ENCODE measurements at regions of chr19 and their contacts with region 1.

Region 1: DNA sequence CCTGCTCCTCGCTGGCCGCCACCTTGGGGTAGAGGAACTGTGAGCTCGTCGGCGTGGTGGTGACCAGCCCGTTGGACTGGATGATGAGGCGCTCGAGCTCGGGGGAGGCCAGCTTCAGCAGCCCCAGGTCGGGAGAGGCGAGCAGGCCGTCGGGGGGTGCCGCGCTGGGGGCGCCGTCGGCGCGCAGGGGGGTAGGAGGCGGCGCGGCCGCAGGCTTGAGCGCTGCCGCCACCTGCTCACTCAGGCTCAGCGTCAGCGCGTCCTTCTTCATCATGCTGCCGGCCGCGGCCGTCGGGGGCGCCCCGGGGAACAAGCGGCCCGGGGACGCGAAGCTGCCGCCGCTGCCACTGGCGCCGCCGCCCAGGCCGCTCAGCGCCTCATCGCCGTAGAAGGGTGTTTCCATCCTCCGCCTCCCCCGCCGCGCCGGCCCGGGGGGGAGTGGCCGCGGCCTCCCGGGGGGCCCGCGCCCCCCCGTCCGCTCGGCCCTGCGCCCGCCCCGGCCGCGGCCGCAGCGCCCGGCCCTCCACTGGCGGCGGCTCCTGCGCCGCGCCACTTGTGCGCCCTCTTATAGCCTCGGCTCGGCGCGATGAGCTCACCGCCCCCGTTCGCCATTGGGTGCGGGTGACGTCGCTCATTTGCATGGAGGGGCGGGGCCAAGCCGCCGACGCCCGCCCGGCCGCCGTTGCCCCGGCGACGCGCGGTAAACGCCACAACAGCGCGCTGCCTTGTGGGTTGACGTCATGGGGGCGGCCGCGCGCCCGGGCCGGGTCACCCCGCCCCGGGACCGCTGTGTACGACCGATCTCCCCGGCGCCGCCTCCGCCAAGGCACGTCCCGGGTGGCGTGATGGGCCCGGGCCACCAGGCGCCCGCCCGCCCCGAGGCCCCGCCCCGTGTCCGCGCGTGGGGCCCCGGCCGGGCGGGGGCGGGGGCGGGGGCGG is at the start of gene JUND:
- DNase-seq: peak; percentile 62 to 98
- ATAC-seq: peak; percentile 64 to 72
- H3K4me3 ChIP-seq: peak within 1 kb of the TSS; percentile 97
- H3K27ac ChIP-seq: peak within 1 kb of the TSS; percentile 96 to 99
- H3K4me1 ChIP-seq: peaks cover 26% of the 10 kb centered on the region
- CTCF ChIP-seq: no peak
- EP300 ChIP-seq: no peak
- POLR2A ChIP-seq: peak; percentile 92
- RAD21 ChIP-seq: no peak
- polyA plus RNA-seq, gene JUND: 52.9 and 68.9 TPM in 2 replicates

Region 2: DNA sequence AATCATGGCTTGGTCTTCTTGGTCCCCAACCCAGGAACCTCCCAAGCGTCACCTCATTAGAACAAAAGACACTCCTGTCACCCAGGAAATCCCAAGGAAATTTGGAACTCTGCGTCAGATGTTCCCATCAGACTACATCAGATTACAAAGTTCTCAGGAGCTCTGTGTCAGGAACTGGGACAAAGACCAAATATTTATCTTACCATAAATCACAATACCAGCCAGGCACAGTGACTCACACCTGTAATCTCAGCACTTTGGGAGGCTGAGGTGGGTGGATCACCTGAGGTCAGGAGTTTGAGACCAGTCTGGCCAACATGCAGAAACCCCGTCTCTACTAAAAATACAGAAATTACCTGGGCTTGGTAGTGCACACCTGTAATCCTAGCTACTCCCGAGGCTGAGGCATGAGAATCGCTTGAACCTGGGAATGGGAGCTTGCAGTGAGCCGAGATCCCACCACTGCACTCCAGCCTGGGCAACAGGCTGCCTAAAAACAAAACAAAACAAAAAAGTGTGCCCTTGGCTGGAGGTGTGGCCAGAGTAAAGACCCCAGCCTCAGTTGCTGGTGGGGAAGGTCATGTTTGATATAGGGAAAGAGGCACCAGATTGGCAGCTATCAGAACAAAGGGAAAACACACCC is 365.3 kb before region 1 on chr19:
- CTCF ChIA-PET with region 1: no interaction called
- POLR2A ChIA-PET with region 1: no interaction called
- DNase-seq: peak; percentile 36 to 73
- ATAC-seq: peak in 1 of 2 experiments; percentile 76; a peak in 4 of 6 replicates
- H3K4me3 ChIP-seq: no peak overlapping the region
- H3K27ac ChIP-seq: peak overlapping the region; percentile 42 to 60; a peak in 3 of 6 replicates
- H3K4me1 ChIP-seq: peaks cover 17% of the 10 kb centered on the region
- CTCF ChIP-seq: no peak
- EP300 ChIP-seq: no peak
- POLR2A ChIP-seq: no peak
- RAD21 ChIP-seq: no peak

Region 3: DNA sequence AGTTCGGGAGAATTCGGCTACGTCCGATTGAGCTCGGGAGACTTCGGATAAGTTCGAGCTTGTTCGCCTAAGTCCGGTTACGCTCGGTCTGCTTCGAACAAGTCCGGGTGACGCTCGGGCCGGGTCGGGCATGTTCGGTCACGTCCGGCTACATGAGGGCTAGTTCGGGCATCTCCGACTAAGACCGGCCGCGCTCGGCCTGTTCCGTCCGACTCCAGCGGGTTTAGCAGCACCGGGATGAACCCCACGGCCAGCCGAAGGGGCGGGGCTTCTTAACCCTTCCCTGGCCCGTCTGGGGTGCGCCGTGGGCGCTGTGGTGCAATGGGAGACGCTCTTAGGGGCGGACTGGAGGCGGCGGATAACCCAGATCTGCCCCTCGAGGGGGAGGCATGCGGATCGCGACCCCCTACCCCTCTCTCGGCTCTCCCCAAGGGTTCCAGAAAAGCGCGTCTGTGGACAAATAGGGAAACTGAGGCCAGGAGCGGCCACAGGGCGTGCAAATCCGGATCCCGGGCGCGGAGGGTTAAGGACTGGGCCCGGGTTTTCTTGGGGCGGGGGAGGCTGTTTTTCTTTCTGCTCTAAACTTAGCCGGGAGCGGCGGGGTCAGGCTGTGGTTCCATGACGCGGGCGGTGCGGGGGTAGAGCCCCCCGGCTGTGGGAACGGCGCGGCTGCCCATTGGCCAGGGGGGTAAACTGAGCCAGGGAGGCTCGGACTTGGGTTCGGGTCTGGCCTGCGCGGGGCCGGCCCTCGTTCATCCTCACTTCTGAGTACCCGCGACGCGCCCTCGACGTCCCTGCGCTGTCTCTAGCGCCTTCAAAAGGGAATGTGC is 56.6 kb before region 1 on chr19:
- CTCF ChIA-PET with region 1: interaction called, 5 read pairs
- POLR2A ChIA-PET with region 1: interaction called, 10 read pairs
- DNase-seq: peak; percentile 89 to 99
- ATAC-seq: peak; percentile 92 to 98
- H3K4me3 ChIP-seq: peak overlapping the region; percentile 68
- H3K27ac ChIP-seq: peak overlapping the region; percentile 83 to 86
- H3K4me1 ChIP-seq: peaks cover 5% of the 10 kb centered on the region; the same call in 2 of the 3 replicates
- CTCF ChIP-seq: no peak
- EP300 ChIP-seq: no peak
- POLR2A ChIP-seq: no peak
- RAD21 ChIP-seq: no peak

Region 4: GRCh38 chr19:18291590-18292461 is 10.5 kb after region 1 on chr19:
- CTCF ChIA-PET with region 1: interaction called, 57 read pairs
- POLR2A ChIA-PET with region 1: interaction called, 235 read pairs
- DNase-seq: peak; percentile 65 to 93
- ATAC-seq: peak; percentile 74 to 77
- H3K4me3 ChIP-seq: peak overlapping the region; percentile 56
- H3K27ac ChIP-seq: peak overlapping the region; percentile 99 to 100
- H3K4me1 ChIP-seq: peaks cover 30% of the 10 kb centered on the region
- CTCF ChIP-seq: no peak
- EP300 ChIP-seq: peak; percentile 45 to 87; a peak in 3 of 5 replicates
- POLR2A ChIP-seq: peak; percentile 29
- RAD21 ChIP-seq: no peak

Region 5: GRCh38 chr19:18310118-18310909 is 29.0 kb after region 1 on chr19:
- CTCF ChIA-PET with region 1: interaction called, 27 read pairs
- POLR2A ChIA-PET with region 1: interaction called, 123 read pairs
- DNase-seq: no peak
- ATAC-seq: no peak
- H3K4me3 ChIP-seq: no peak overlapping the region
- H3K27ac ChIP-seq: peak overlapping the region in 1 of 2 experiments; percentile 46; a peak in 1 of 6 replicates
- H3K4me1 ChIP-seq: peaks cover 12% of the 10 kb centered on the region
- CTCF ChIP-seq: no peak
- EP300 ChIP-seq: no peak
- POLR2A ChIP-seq: no peak
- RAD21 ChIP-seq: no peak

Region 6: GRCh38 chr19:18340190-18340989 is 59.0 kb after region 1 on chr19 and contains the start of gene PGPEP1:
- CTCF ChIA-PET with region 1: interaction called, 8 read pairs
- POLR2A ChIA-PET with region 1: interaction called, 18 read pairs
- DNase-seq: peak in 1 of 2 experiments; percentile 38
- ATAC-seq: peak; percentile 60; a peak in 5 of 6 replicates
- H3K4me3 ChIP-seq: peak within 1 kb of the TSS; percentile 60
- H3K27ac ChIP-seq: peak within 1 kb of the TSS; percentile 69 to 87
- H3K4me1 ChIP-seq: peaks cover 12% of the 10 kb centered on the region
- CTCF ChIP-seq: no peak
- EP300 ChIP-seq: no peak
- POLR2A ChIP-seq: no peak; the same call in 1 of the 2 replicates
- RAD21 ChIP-seq: no peak
- polyA plus RNA-seq, gene PGPEP1: 7.1 and 8.6 TPM in 2 replicates

Region 7: GRCh38 chr19:18571564-18572300 is 290.4 kb after region 1 on chr19 and contains the start of gene UBA52:
- CTCF ChIA-PET with region 1: no interaction called
- POLR2A ChIA-PET with region 1: interaction called, 10 read pairs
- DNase-seq: peak; percentile 69 to 97
- ATAC-seq: peak; percentile 96 to 98
- H3K4me3 ChIP-seq: peak within 1 kb of the TSS; percentile 87
- H3K27ac ChIP-seq: peak within 1 kb of the TSS; percentile 86 to 95
- H3K4me1 ChIP-seq: peaks cover 19% of the 10 kb centered on the region
- CTCF ChIP-seq: no peak
- EP300 ChIP-seq: no peak
- POLR2A ChIP-seq: peak; percentile 72
- RAD21 ChIP-seq: no peak
- polyA plus RNA-seq, gene UBA52: 888 and 1,266 TPM in 2 replicates